ENCODE measurements at regions of chr15 and their contacts with region 1.

Region 1: DNA sequence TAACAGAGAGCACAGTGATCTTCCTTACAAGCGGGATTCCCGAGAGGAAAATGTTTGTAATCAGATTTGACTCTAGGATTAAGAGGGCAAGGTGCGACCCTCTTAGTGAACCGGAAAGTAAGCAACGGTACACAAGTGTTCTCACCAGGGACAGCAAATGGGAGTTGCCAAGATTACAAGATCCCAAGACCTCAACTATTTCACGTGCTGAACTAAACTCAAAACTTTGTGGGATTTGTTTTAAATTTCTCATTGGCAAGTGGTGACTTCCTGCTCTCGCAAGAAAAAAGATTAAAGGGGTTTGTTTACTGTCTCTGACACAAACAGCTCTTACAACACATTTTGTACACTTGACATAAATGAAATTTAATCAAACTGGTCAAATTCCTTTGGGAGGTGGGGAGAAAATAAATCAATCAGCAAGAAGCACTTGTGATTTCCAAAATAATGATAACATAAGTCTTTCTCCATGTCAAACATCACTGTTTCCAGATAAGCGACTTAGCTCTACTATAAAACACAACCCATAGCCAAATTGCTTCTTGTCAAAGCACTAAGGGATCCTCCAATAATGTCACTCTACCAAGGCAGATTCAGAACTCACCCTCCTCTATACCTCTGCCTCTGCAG is 2.3 kb upstream of the PGPEP1L start:
- DNase-seq: no peak
- ATAC-seq: no peak
- H3K4me3 ChIP-seq: no peak overlapping the region
- H3K27ac ChIP-seq: no peak overlapping the region
- H3K4me1 ChIP-seq: peaks cover 0 to 3% of the 10 kb centered on the region in 2 experiments; a peak in 2 of 5 replicates
- H3K27me3 ChIP-seq: peaks cover 9 to 26% of the 10 kb centered on the region in 2 experiments; a peak in 4 of 5 replicates
- CTCF ChIP-seq: no peak
- EP300 ChIP-seq: no peak
- POLR2A ChIP-seq: no peak
- RAD21 ChIP-seq: no peak

Region 2: DNA sequence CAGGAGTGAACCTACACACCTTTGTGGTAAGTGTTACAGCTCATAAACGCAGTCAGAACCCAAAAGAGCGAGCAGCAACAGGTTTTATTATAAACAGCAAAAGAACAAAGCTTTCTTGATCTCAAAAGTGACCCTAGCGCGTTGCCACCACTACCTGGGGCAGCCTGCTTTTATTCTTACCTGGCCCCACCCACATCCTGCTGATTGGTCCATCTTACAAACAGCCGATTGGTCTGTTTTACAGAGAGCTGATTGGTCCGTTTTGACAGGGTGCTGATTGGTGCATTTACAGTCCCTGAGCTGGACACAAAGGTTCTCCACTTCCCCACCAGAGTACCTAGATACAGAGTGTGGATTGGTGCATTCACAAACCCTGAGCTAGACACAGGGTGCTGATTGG is 906.3 kb before region 1 on chr15:
- CTCF ChIA-PET with region 1: no interaction called
- POLR2A ChIA-PET with region 1: no interaction called
- in situ Hi-C with region 1: loop called (anchors 10 kb)
- intact Hi-C with region 1: no loop called
- DNase-seq: peak in 1 of 4 experiments; percentile 16
- ATAC-seq: peak; percentile 68
- H3K4me3 ChIP-seq: no peak overlapping the region
- H3K27ac ChIP-seq: no peak overlapping the region
- H3K4me1 ChIP-seq: no peaks in the 10 kb centered on the region; a peak in 1 of 5 replicates
- H3K27me3 ChIP-seq: peaks cover 0 to 40% of the 10 kb centered on the region in 2 experiments; a peak in 3 of 5 replicates
- CTCF ChIP-seq: no peak
- EP300 ChIP-seq: no peak
- POLR2A ChIP-seq: no peak
- RAD21 ChIP-seq: no peak

Region 3: GRCh38 chr15:99021694-99022093 is 11.8 kb after region 1 on chr15:
- CTCF ChIA-PET with region 1: no interaction called
- POLR2A ChIA-PET with region 1: no interaction called
- in situ Hi-C with region 1: no loop called
- intact Hi-C with region 1: no loop called
- DNase-seq: no peak
- ATAC-seq: no peak
- H3K4me3 ChIP-seq: no peak overlapping the region
- H3K27ac ChIP-seq: no peak overlapping the region
- H3K4me1 ChIP-seq: no peaks in the 10 kb centered on the region
- H3K27me3 ChIP-seq: peaks cover 0 to 35% of the 10 kb centered on the region in 2 experiments; a peak in 3 of 5 replicates
- CTCF ChIP-seq: no peak
- EP300 ChIP-seq: no peak
- POLR2A ChIP-seq: no peak
- RAD21 ChIP-seq: no peak

Region 4: DNA sequence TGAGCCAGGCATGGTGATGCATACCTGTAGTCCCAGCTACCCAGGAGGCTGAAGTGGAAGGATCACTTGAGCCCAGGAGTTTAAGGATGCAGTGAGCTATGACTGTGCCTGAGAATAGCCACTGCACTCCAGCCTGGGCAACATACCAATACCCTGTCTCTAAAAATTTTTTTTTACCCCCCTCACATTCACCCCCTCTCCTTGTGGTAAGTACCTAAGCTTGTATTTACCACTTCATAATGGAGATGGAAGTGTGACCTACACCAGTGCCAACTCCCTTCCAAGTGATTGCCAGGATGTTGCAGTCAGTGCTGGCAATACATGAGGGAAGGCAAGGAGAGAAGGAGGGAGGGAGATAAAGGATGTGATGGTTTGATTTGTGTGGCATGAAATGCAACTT is 325.7 kb after region 1 on chr15:
- CTCF ChIA-PET with region 1: no interaction called
- POLR2A ChIA-PET with region 1: no interaction called
- in situ Hi-C with region 1: no loop called
- intact Hi-C with region 1: no loop called
- DNase-seq: no peak
- ATAC-seq: no peak
- H3K4me3 ChIP-seq: no peak overlapping the region
- H3K27ac ChIP-seq: no peak overlapping the region
- H3K4me1 ChIP-seq: no peaks in the 10 kb centered on the region
- H3K27me3 ChIP-seq: no peaks in the 10 kb centered on the region
- CTCF ChIP-seq: no peak
- EP300 ChIP-seq: no peak
- POLR2A ChIP-seq: no peak
- RAD21 ChIP-seq: no peak